ENCODE measurements at regions of chr2 and their contacts with region 1.

Region 1: GRCh38 chr2:125696561-125696960 is 959.4 kb upstream of the GYPC start:
- DNase-seq: no peak

Region 2: GRCh38 chr2:125479143-125479636 is 217.4 kb before region 1 on chr2:
- intact Hi-C with region 1: no loop called
- DNase-seq: peak in 2 of 10 donors; percentile 68 to 69

Region 3: DNA sequence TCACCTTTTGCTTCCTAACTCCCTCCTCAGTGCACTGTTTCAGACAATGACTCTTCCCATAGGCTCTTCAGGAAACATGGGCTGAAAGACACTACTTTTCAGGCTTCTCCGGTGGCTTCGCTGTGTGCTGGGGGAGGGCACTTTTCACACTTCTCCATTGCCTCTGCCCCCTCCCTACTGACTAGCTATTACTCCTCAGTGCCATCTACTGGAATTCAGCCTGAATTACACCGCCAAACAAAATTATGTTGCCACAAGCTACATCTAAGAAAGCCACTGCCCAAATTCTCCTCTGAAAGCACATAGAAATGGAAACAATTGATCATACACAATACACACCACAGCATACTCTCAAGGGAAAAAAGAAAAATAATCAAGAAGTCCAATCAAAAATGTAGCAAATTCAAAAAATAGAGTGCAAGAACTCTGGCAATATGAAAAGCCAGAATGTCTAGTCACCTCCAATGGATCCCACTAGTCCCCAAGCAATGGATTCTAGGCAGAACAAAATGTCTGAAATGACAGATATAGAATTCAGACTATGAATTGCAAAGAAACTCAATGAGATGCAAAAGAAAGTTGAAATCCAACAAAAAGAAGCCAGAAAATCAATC is 180.0 kb before region 1 on chr2:
- intact Hi-C with region 1: no loop called
- DNase-seq: no peak

Region 4: DNA sequence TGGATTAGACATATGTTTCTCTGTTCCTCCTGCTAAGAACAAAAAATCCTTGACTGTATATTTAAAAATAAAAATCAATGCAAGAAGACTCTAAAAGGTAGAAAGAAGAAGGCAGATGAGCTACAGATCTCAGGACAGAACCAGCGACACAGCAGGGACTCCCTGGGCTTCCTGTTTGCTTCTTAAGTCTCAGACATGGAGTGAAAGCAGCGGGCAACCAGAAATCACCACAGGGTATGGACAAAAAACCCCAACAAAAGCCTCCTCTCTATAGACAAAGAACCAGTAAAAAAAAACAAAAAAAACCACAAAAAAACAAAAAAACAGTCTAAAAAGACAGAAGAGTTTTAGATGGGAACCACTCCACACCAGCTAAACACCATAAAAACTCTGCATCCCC is 11.6 kb before region 1 on chr2:
- intact Hi-C with region 1: loop called (anchors 1 kb)
- DNase-seq: no peak